ENCODE measurements at regions of chr17 and their contacts with region 1.

Region 1: DNA sequence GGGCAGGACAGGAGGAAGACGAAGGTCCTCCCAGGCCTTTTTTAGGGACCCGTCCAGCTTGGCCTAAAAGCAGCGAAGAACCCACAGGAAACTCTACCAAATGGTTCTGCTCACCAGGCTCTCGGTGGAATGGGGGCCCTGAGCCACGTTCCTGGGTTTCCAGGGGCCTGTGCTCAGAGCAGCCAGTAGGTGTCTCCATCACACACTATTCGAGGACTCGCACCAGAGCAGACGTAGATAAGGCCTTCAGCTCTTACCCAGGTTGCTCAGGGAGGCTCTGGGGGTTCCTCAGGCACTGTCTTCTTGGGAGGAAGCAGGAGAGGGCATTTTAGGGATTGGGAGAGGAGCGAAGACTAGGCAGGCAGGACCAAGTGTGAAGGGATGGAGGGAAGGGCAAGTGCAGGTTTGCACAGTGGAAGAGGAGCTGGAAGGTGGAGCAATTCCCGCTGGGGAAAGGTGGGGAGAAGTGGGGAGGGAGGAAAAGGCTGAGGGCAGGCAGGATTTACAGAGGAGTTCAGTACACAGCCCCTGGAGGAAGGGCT is 157.1 kb downstream of the RGS9 start:
- DNase-seq: peak; percentile 70
- ATAC-seq: peak; percentile 95
- H3K4me3 Mint-ChIP-seq: no peak overlapping the region
- H3K27ac Mint-ChIP-seq: no peak overlapping the region
- H3K4me1 Mint-ChIP-seq: no peaks in the 10 kb centered on the region
- H3K27me3 Mint-ChIP-seq: no peaks in the 10 kb centered on the region
- CTCF ChIP-seq: peak; percentile 77

Region 2: GRCh38 chr17:65231662-65232335 is 62.5 kb before region 1 on chr17:
- CTCF ChIA-PET with region 1: interaction called, 32 read pairs
- POLR2A ChIA-PET with region 1: no interaction called
- intact Hi-C with region 1: no loop called
- DNase-seq: peak; percentile 66
- ATAC-seq: no peak
- H3K4me3 Mint-ChIP-seq: no peak overlapping the region
- H3K27ac Mint-ChIP-seq: no peak overlapping the region
- H3K4me1 Mint-ChIP-seq: peaks cover 24% of the 10 kb centered on the region
- H3K27me3 Mint-ChIP-seq: peaks cover 12% of the 10 kb centered on the region
- CTCF ChIP-seq: peak; percentile 68

Region 3: DNA sequence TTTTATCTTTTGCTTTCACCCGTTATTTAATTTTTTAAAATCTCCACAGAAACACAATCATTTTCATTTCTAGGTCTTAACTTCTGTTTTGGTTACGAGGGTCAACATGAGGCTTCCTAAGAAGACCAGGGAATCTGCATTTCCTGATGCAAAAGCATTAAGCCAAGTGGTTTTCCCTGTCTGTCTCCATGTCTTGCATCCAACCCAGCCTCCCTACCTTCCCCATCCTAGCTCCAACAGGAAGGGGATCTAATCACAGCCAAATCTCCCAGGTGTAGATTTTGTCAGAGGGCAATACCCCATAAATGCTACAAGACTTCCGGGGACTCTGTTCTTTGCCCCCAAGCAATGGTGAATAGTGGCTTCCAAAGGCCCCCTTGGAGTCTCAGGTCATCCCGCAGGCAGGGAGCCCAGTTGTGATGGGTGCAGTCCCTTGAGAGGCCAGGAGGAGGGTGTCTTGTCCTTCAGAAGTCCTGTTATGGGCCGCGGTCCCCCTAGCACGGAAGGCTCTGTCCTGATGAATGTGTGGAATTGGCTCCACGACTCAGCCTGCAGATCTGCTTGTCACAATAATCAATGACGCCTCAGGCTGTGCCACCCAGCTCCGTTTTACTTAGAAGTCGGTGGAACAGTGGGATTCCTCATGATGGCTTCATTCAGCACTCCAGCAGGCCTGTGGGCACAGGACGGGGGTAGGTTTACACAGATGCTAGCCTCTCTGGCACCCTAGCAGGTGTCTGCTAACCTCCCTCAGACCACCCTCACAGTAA is 16.0 kb before region 1 on chr17:
- CTCF ChIA-PET with region 1: interaction called, 14 read pairs
- POLR2A ChIA-PET with region 1: no interaction called
- intact Hi-C with region 1: no loop called
- DNase-seq: peak; percentile 44
- ATAC-seq: peak; percentile 49
- H3K4me3 Mint-ChIP-seq: no peak overlapping the region
- H3K27ac Mint-ChIP-seq: no peak overlapping the region
- H3K4me1 Mint-ChIP-seq: peaks cover 11% of the 10 kb centered on the region
- H3K27me3 Mint-ChIP-seq: peaks cover 19% of the 10 kb centered on the region
- CTCF ChIP-seq: peak; percentile 41

Region 4: GRCh38 chr17:65556014-65556909 is 262.0 kb after region 1 on chr17:
- CTCF ChIA-PET with region 1: interaction called, 32 read pairs
- POLR2A ChIA-PET with region 1: interaction called, 3 read pairs
- intact Hi-C with region 1: loop called (anchors 5 kb)
- DNase-seq: peak; percentile 94
- ATAC-seq: peak; percentile 46
- H3K4me3 Mint-ChIP-seq: no peak overlapping the region
- H3K27ac Mint-ChIP-seq: no peak overlapping the region
- H3K4me1 Mint-ChIP-seq: peaks cover 21% of the 10 kb centered on the region
- H3K27me3 Mint-ChIP-seq: peaks cover 4% of the 10 kb centered on the region
- CTCF ChIP-seq: peak; percentile 84

Region 5: GRCh38 chr17:65988081-65988850 is 694.0 kb after region 1 on chr17:
- CTCF ChIA-PET with region 1: interaction called, 3 read pairs
- POLR2A ChIA-PET with region 1: no interaction called
- intact Hi-C with region 1: loop called (anchors 10 kb)
- DNase-seq: no peak
- ATAC-seq: no peak
- H3K4me3 Mint-ChIP-seq: no peak overlapping the region
- H3K27ac Mint-ChIP-seq: no peak overlapping the region
- H3K4me1 Mint-ChIP-seq: no peaks in the 10 kb centered on the region
- H3K27me3 Mint-ChIP-seq: no peaks in the 10 kb centered on the region
- CTCF ChIP-seq: peak; percentile 63

Measured in activated CD8-positive, alpha-beta T cell treated with anti-CD3 and anti-CD28 coated beads for 36 hours (primary cell).